ENCODE measurements at regions of chr2 and their contacts with region 1.

Region 1: DNA sequence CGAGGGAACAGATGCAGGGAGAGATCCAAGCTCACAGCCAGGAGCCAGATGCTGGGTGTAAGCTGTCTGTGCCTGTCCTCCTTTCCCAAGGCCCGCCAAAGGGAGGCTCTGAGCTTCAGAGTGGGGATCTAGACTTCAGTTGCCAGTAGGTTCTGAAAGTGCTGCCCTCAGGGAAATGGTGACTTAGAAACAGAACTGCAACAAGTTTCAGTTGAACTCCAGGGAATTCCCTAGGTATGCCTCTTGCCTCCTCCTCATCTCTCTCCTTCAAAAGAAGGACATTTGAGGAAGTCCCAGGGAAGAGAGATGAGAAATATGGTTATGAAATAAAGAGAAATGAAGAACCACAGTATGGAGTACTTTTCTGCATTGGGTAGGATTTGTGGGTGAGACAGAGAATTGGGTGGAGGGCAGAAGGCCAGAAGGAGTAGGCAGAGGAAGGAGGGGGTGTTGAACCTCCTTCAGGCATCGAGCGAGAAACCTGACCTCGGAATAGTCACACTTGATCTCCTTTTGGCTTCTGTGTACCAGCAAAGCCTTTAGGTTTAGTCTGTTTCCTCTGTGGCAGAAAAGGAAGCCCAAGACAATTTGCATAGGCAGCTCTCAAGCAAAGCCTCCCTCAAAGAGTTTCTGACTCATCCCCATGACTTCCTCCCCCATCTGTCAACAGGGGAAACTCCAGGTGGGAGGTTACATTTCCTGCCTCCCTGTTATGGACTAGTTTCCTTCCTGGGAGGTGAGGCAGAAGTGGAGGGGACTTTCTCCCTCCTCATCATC is 45.7 kb downstream of the QPCT start:
- DNase-seq: peak; percentile 94
- ATAC-seq: peak; percentile 96
- H3K4me3 ChIP-seq: peak overlapping the region; percentile 19; the same call in 1 of the 2 replicates
- H3K27ac ChIP-seq: peak overlapping the region; percentile 63
- H3K4me1 ChIP-seq: peaks cover 30% of the 10 kb centered on the region
- H3K27me3 ChIP-seq: no peaks in the 10 kb centered on the region
- CTCF ChIP-seq: no peak
- EP300 ChIP-seq: peak; percentile 58 to 90; a peak in 3 of 4 replicates
- POLR2A ChIP-seq: no peak
- RAD21 ChIP-seq: peak; percentile 9; the same call in 1 of the 2 replicates

Region 2: DNA sequence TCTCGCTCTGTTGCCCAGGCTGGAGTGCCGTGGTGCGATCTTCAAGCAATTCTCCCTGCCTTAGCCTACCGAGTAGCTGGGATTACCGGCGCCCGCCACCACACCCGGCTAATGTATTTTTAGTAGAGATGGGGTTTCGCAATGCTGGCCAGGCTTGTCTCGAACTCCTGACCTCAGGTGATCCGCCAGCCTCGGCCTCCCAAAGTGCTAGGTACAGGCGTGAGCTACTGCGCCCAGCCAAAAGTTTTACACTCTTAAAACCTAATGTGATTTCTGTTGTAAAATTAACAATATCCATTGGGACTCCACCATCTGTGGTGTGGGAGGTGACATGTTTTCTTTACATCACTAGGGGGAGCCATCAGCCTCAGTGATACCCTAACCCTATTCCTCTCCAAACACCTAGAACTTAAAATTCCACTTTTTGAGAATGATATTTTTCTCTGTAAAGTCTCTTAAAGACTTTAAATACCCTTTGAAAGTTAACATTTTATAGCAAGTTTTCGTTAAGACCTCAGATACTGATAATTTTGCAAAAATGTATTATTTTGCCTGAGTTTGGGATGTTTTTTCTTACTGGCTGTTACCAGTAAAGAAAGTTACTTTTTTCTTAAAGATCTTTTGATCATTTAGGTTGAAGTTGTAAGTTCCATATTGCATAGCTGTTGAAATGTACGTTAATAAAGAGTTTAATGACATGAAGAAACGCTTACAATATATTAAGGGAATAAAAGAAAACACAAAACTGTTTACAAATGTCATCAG is 221.8 kb before region 1 on chr2:
- CTCF ChIA-PET with region 1: interaction called, 4 read pairs
- POLR2A ChIA-PET with region 1: no interaction called
- RAD21 ChIA-PET with region 1: no interaction called
- SMC1A ChIA-PET with region 1: interaction called, 6 read pairs
- in situ Hi-C with region 1: no loop called
- intact Hi-C with region 1: loop called (anchors 5 kb)
- DNase-seq: no peak
- ATAC-seq: peak; percentile 91
- H3K4me3 ChIP-seq: no peak overlapping the region
- H3K27ac ChIP-seq: no peak overlapping the region
- H3K4me1 ChIP-seq: no peaks in the 10 kb centered on the region
- H3K27me3 ChIP-seq: no peaks in the 10 kb centered on the region
- CTCF ChIP-seq: peak; percentile 70 to 75 (median 73)
- EP300 ChIP-seq: no peak
- POLR2A ChIP-seq: no peak
- RAD21 ChIP-seq: peak; percentile 73

Region 3: DNA sequence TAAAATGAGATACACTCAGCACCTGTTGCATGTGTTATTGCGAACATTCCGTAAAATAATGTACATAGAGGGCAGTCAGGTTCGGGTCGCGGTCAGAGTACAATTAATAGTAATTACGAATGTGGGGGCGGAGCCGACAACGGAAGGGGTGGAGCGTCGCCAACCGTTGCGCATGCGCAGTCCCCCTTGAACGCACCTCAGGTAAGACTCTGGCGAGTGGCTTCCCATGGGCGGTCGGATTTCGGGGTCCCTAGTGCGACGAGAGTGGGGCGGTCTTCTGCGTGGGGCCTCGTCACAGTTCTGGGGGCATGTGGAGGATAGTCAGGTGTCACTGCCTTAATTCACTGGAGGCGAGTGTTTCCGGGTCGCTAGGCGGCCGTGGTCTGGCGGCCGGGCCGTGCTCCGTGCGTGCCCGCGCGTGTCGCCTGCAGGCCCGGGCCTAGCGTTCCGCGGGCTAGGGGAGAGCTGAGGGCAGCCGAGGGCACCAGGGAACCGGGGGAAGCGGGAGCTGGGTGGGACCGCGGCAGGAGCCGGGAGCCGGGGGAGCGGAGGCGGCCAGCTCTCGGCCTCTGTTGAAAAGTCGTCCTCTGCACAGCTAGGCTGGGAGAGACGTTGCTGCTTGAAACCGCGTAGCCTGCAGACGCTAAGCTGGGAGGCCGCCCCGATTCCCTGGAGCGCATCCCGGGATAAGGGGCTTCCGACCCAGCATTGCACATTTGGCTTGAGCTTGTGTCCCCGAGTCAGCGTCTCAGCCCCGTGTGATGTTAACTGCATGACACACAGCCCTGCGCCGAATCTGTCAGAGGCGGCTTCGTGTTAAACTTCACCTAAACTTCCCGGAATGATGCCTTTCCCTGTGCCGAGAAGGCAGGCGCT is 193.6 kb before region 1 on chr2 and contains the start of gene CEBPZOS:
- CTCF ChIA-PET with region 1: no interaction called
- POLR2A ChIA-PET with region 1: no interaction called
- RAD21 ChIA-PET with region 1: no interaction called
- SMC1A ChIA-PET with region 1: no interaction called
- in situ Hi-C with region 1: no loop called
- intact Hi-C with region 1: no loop called
- DNase-seq: peak; percentile 71
- ATAC-seq: peak; percentile 85
- H3K4me3 ChIP-seq: peak within 1 kb of the TSS; percentile 77
- H3K27ac ChIP-seq: peak within 1 kb of the TSS; percentile 78
- H3K4me1 ChIP-seq: peaks cover 5% of the 10 kb centered on the region; the same call in 1 of the 2 replicates
- H3K27me3 ChIP-seq: no peaks in the 10 kb centered on the region
- CTCF ChIP-seq: no peak
- EP300 ChIP-seq: no peak
- POLR2A ChIP-seq: peak; percentile 86
- RAD21 ChIP-seq: no peak
- polyA plus RNA-seq, gene CEBPZOS: 22.9 to 50.8 TPM

Region 4: GRCh38 chr2:37376421-37377186 is 13.6 kb before region 1 on chr2:
- CTCF ChIA-PET with region 1: interaction called, 53 read pairs
- POLR2A ChIA-PET with region 1: interaction called, 22 read pairs
- RAD21 ChIA-PET with region 1: interaction called, 39 read pairs
- SMC1A ChIA-PET with region 1: interaction called, 53 read pairs
- in situ Hi-C with region 1: no loop called
- intact Hi-C with region 1: loop called (anchors 1 kb)
- DNase-seq: peak; percentile 78
- ATAC-seq: peak; percentile 96
- H3K4me3 ChIP-seq: peak overlapping the region; percentile 41; the same call in 1 of the 2 replicates
- H3K27ac ChIP-seq: peak overlapping the region; percentile 43; the same call in 1 of the 2 replicates
- H3K4me1 ChIP-seq: peaks cover 24% of the 10 kb centered on the region
- H3K27me3 ChIP-seq: peaks cover 0 to 14% of the 10 kb centered on the region in 2 experiments; a peak in 1 of 4 replicates
- CTCF ChIP-seq: no peak
- EP300 ChIP-seq: peak; percentile 93 to 97; a peak in 3 of 4 replicates
- POLR2A ChIP-seq: no peak
- RAD21 ChIP-seq: no peak

Region 5: GRCh38 chr2:37672104-37672869 is 282.1 kb after region 1 on chr2:
- CTCF ChIA-PET with region 1: interaction called, 3 read pairs
- POLR2A ChIA-PET with region 1: interaction called, 3 read pairs
- RAD21 ChIA-PET with region 1: no interaction called
- SMC1A ChIA-PET with region 1: interaction called, 12 read pairs
- in situ Hi-C with region 1: no loop called
- intact Hi-C with region 1: no loop called
- DNase-seq: no peak
- ATAC-seq: peak; percentile 58
- H3K4me3 ChIP-seq: peak overlapping the region; percentile 87
- H3K27ac ChIP-seq: peak overlapping the region; percentile 77
- H3K4me1 ChIP-seq: no peaks in the 10 kb centered on the region; the same call in 1 of the 2 replicates
- H3K27me3 ChIP-seq: no peaks in the 10 kb centered on the region
- CTCF ChIP-seq: no peak
- EP300 ChIP-seq: no peak
- POLR2A ChIP-seq: peak; percentile 51; the same call in 1 of the 2 replicates
- RAD21 ChIP-seq: no peak

Region 6: GRCh38 chr2:37851828-37852584 is 461.8 kb after region 1 on chr2:
- CTCF ChIA-PET with region 1: interaction called, 11 read pairs
- POLR2A ChIA-PET with region 1: interaction called, 4 read pairs
- RAD21 ChIA-PET with region 1: interaction called, 3 read pairs
- SMC1A ChIA-PET with region 1: interaction called, 6 read pairs
- in situ Hi-C with region 1: no loop called
- intact Hi-C with region 1: no loop called
- DNase-seq: peak; percentile 80
- ATAC-seq: peak; percentile 86
- H3K4me3 ChIP-seq: peak overlapping the region; percentile 17; the same call in 1 of the 2 replicates
- H3K27ac ChIP-seq: peak overlapping the region; percentile 67
- H3K4me1 ChIP-seq: peaks cover 32% of the 10 kb centered on the region
- H3K27me3 ChIP-seq: no peaks in the 10 kb centered on the region
- CTCF ChIP-seq: peak in 1 of 3 experiments; percentile 8; a peak in 1 of 6 replicates
- EP300 ChIP-seq: peak; percentile 23 to 53; a peak in 1 of 4 replicates
- POLR2A ChIP-seq: no peak
- RAD21 ChIP-seq: peak; percentile 45

Region 7: GRCh38 chr2:37890893-37891495 is 500.8 kb after region 1 on chr2:
- CTCF ChIA-PET with region 1: interaction called, 64 read pairs
- POLR2A ChIA-PET with region 1: interaction called, 3 read pairs
- RAD21 ChIA-PET with region 1: interaction called, 28 read pairs
- SMC1A ChIA-PET with region 1: interaction called, 18 read pairs
- in situ Hi-C with region 1: no loop called
- intact Hi-C with region 1: no loop called
- DNase-seq: no peak
- ATAC-seq: peak; percentile 84
- H3K4me3 ChIP-seq: no peak overlapping the region
- H3K27ac ChIP-seq: no peak overlapping the region
- H3K4me1 ChIP-seq: peaks cover 43% of the 10 kb centered on the region
- H3K27me3 ChIP-seq: no peaks in the 10 kb centered on the region
- CTCF ChIP-seq: peak; percentile 73 to 84 (median 82)
- EP300 ChIP-seq: peak in 1 of 2 experiments; percentile 15; a peak in 1 of 4 replicates
- POLR2A ChIP-seq: no peak
- RAD21 ChIP-seq: peak; percentile 88

Region 8: DNA sequence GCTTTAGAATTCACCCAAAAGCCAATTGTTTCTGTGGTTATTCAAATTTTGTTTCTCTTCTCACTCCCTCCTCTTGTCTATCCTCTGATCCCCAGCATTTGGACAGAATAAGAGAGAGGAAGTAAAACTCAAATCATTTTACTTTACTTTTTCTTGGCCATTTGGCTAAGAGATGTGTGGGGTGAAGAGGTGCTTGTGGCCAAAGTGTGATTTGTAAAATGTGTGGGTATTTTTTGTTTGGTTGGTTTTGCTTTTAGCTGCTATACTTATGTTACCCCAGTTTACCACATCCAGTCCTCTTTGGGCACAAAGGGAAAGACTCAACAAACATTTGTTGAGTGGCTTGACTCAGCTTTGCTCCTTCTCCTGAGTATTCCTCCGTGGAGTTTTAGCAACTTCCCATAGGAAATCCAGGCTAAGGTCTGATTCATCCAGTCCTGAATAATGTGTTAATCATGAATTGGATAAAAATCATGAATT is 794.9 kb after region 1 on chr2:
- CTCF ChIA-PET with region 1: no interaction called
- POLR2A ChIA-PET with region 1: no interaction called
- RAD21 ChIA-PET with region 1: no interaction called
- SMC1A ChIA-PET with region 1: no interaction called
- in situ Hi-C with region 1: no loop called
- intact Hi-C with region 1: loop called (anchors 10 kb)
- DNase-seq: peak; percentile 94
- ATAC-seq: peak; percentile 98
- H3K4me3 ChIP-seq: 0 out of 2 replicates have a peak overlapping the region, but pooled peaks have one; percentile 18
- H3K27ac ChIP-seq: peak overlapping the region; percentile 72
- H3K4me1 ChIP-seq: peaks cover 17% of the 10 kb centered on the region
- H3K27me3 ChIP-seq: no peaks in the 10 kb centered on the region
- CTCF ChIP-seq: no peak
- EP300 ChIP-seq: peak; percentile 48 to 65; a peak in 3 of 4 replicates
- POLR2A ChIP-seq: no peak
- RAD21 ChIP-seq: peak; percentile 18; the same call in 1 of the 2 replicates

Measured in GM12878 (cell line).